ENCODE measurements at regions of chr17 and their contacts with region 1.

Region 1: DNA sequence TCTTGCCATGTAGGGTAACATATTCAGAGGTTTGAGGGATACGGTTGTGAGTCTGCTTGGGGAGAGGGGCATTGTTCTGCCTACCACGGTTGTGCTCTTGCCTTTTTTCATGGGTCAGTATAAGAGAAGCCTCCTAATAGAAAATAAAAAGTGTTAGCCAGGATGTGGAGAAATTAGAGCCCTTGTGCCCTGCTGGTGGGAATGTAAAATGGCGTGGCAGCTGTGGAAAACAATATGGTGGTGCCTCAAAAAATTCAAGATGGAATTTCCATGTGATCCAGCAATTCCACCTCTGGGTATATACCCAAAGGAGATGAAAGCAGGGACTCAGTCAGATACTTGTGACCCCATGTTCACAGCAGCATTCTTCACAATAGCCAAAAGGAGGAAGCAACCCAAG is 14.2 kb upstream of the LRRC75A start:
- DNase-seq: no peak
- H3K4me3 ChIP-seq: no peak overlapping the region
- H3K27ac ChIP-seq: no peak overlapping the region
- H3K4me1 ChIP-seq: no peaks in the 10 kb centered on the region
- H3K27me3 ChIP-seq: no peaks in the 10 kb centered on the region
- CTCF ChIP-seq: peak in 1 of 2 donors; percentile 13

Region 2: GRCh38 chr17:16428098-16428882 is 77.9 kb before region 1 on chr17:
- CTCF ChIA-PET with region 1: no interaction called
- dilution Hi-C with region 1: loop called (anchors 5 kb)
- in situ Hi-C with region 1: no loop called
- intact Hi-C with region 1: no loop called
- DNase-seq: no peak
- H3K4me3 ChIP-seq: no peak overlapping the region
- H3K27ac ChIP-seq: no peak overlapping the region
- H3K4me1 ChIP-seq: no peaks in the 10 kb centered on the region
- H3K27me3 ChIP-seq: no peaks in the 10 kb centered on the region
- CTCF ChIP-seq: peak; percentile 75 to 83